ENCODE measurements at regions of chr20 and their contacts with region 1.

Region 1: GRCh38 chr20:53915446-53916172 is 154.8 kb downstream of the BCAS1 start:
- DNase-seq: peak; percentile 84 to 93 (median 87)
- ATAC-seq: peak; percentile 84
- H3K4me3 ChIP-seq: peak overlapping the region; percentile 38
- H3K27ac ChIP-seq: peak overlapping the region; percentile 82
- H3K4me1 ChIP-seq: peaks cover 25 to 41% of the 10 kb centered on the region in 2 experiments; a peak in 3 of 5 replicates
- H3K27me3 ChIP-seq: no peaks in the 10 kb centered on the region
- CTCF ChIP-seq: peak; percentile 76 to 91 (median 87)
- EP300 ChIP-seq: no peak
- POLR2A ChIP-seq: no peak; the same call in 1 of the 2 replicates
- RAD21 ChIP-seq: peak; percentile 78 to 85

Region 2: DNA sequence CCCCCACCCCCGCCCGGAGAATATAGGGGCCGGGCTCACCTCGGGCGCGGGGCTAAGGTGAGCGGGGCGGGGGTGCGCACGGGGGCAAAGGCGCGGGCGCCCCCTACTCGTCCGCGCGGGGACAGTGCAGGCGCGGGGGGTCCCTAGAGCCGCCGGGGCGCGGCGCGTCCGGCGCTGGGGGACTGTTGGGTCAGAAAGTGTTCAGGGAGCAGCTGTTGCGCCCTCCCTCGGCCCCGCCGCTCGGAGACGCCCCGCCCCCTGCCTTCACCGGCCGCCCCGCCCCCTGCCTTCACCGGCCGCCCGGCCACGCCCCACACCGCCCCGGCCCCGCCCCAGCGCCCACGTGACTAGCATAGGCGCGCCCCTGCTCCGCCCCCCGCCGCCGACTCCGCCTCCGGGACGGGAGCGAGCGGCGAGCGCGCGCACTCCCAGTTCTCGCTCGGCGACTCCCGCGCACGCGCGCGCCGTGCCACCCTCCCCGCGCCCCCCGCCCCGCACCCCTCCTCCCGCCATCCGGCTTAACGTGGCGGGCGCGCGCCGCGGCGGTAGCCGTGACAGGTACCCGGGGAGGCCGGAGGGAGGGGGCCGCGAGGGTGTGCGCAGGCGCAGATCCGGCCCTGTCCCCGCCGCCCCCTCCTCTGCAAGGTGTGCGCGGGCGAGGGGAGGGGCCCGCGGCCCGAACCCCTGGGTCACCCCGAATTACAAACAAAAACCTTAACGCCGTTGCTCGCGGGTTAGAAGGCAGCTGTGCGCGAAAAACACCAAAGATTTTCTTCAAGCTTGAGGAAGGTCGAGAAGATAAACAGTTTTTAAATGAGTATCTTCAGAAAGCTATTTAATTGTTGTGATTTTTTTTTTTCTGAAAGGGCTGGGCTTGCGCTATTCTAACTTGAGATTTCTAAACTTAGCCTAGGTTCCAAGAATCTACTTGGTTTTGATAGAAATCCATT is 321.3 kb before region 1 on chr20:
- CTCF ChIA-PET with region 1: no interaction called
- POLR2A ChIA-PET with region 1: interaction called, 8 read pairs
- in situ Hi-C with region 1: no loop called
- intact Hi-C with region 1: loop called (anchors 5 kb)
- DNase-seq: peak; percentile 85 to 92 (median 88)
- ATAC-seq: peak; percentile 76
- H3K4me3 ChIP-seq: peak overlapping the region; percentile 90
- H3K27ac ChIP-seq: peak overlapping the region; percentile 93
- H3K4me1 ChIP-seq: peaks cover 8 to 15% of the 10 kb centered on the region in 2 experiments; a peak in 4 of 5 replicates
- H3K27me3 ChIP-seq: no peaks in the 10 kb centered on the region
- CTCF ChIP-seq: peak in 2 of 3 experiments; percentile 59 to 79; a peak in 4 of 6 replicates
- EP300 ChIP-seq: no peak
- POLR2A ChIP-seq: no peak
- RAD21 ChIP-seq: peak; percentile 12 to 58; a peak in 2 of 4 replicates

Region 3: DNA sequence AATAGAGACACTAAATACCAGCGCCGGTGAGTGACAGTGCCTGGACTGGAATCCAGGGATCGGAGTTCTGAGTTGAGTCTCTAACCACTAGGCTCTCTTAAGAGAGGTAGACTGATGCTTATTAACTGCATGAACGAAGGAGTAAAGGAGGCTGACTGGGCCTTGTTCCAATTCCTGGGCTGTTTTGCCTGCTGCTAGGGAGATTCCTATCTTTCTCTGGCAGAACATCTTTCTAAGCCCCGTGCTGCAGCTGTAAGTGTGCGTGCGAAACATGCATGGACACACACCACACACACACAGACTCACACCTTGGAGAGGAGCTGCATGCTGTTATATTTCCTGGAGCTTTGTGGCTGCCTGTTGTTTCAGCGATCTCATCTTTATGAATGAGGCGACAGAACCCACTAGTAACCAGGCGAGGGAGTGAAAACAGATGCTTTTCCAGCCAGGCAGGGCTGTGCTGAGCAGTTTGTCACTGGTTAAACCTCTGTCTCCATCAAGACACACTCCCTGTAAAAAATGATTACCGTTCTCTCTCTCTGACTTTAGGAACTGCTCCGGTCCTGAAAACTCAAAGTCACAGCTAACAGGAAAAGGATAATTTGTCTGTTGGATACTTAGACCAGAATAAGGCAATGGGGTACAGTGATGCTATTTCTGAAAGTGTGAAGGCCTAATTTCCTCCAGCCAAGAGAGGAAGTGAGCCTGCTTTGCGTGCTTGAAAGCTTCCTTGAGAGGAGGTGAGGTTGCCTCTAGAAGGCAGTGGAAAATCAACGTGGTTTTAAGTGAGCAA is 164.6 kb before region 1 on chr20:
- CTCF ChIA-PET with region 1: no interaction called
- POLR2A ChIA-PET with region 1: no interaction called
- in situ Hi-C with region 1: no loop called
- intact Hi-C with region 1: loop called (anchors 5 kb)
- DNase-seq: peak in 2 of 4 experiments; percentile 28 to 68
- ATAC-seq: peak; percentile 61
- H3K4me3 ChIP-seq: no peak overlapping the region
- H3K27ac ChIP-seq: peak overlapping the region; percentile 92
- H3K4me1 ChIP-seq: peaks cover 16 to 39% of the 10 kb centered on the region in 2 experiments
- H3K27me3 ChIP-seq: no peaks in the 10 kb centered on the region
- CTCF ChIP-seq: no peak
- EP300 ChIP-seq: no peak
- POLR2A ChIP-seq: no peak
- RAD21 ChIP-seq: peak in 1 of 2 experiments; percentile 32; a peak in 1 of 4 replicates

Region 4: GRCh38 chr20:53869466-53870258 is 45.9 kb before region 1 on chr20:
- CTCF ChIA-PET with region 1: no interaction called
- POLR2A ChIA-PET with region 1: no interaction called
- in situ Hi-C with region 1: no loop called
- intact Hi-C with region 1: loop called (anchors 5 kb)
- DNase-seq: peak; percentile 54 to 90 (median 64)
- ATAC-seq: peak; percentile 93
- H3K4me3 ChIP-seq: no peak overlapping the region
- H3K27ac ChIP-seq: peak overlapping the region; percentile 48
- H3K4me1 ChIP-seq: peaks cover 2 to 10% of the 10 kb centered on the region in 2 experiments; a peak in 3 of 5 replicates
- H3K27me3 ChIP-seq: no peaks in the 10 kb centered on the region
- CTCF ChIP-seq: peak; percentile 75 to 88 (median 85)
- EP300 ChIP-seq: no peak
- POLR2A ChIP-seq: no peak
- RAD21 ChIP-seq: peak; percentile 88 to 90

Region 5: GRCh38 chr20:53891306-53891944 is 24.2 kb before region 1 on chr20:
- CTCF ChIA-PET with region 1: no interaction called
- POLR2A ChIA-PET with region 1: no interaction called
- in situ Hi-C with region 1: no loop called
- intact Hi-C with region 1: no loop called
- DNase-seq: no peak
- ATAC-seq: no peak
- H3K4me3 ChIP-seq: no peak overlapping the region
- H3K27ac ChIP-seq: no peak overlapping the region
- H3K4me1 ChIP-seq: peaks cover 0 to 8% of the 10 kb centered on the region in 2 experiments; a peak in 2 of 5 replicates
- H3K27me3 ChIP-seq: no peaks in the 10 kb centered on the region
- CTCF ChIP-seq: no peak
- EP300 ChIP-seq: no peak
- POLR2A ChIP-seq: no peak
- RAD21 ChIP-seq: no peak

Region 6: DNA sequence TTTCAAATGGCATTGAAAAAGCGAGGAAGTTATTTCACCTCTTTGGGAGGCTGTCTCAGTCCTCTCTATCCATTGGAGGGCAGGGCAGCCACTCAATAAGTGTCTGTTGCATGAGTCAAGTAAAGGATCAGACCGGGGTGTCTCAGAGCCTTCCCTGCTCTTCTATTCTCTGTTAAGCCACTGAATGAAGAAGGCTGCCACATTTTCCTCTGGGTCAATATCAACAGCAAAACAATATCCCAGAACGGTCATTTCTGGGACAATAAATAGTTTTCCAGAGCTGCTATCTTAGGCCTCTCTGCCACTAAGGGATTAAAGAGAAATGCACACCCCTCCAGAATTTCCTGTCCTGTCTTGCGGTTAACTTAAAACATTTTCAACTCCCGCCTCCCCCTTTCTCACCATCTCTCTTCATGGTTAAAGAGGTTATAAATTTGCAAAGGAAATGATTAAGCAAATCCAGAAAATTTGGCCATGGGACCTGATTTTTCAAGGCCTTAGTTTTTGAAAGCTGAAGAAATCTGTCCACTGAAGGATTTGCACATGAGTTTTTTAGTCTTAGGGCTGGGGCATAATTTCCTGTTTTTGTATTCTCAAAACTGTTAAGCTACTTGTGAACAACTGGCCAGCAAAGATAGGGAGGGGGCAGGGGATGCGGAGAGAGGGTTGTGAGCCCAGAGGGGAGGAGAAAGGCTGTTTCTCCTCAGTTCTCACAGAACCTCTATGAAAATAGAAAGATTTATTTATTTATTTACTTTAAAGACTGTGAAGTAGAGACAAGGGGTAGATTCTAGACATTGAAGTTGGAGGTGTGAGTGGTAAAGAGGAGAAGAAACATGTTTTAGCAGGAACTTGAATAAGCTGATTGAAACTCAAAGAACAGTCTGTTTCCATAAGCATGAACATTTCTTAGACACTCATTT is 19.1 kb after region 1 on chr20:
- CTCF ChIA-PET with region 1: no interaction called
- POLR2A ChIA-PET with region 1: interaction called, 6 read pairs
- in situ Hi-C with region 1: no loop called
- intact Hi-C with region 1: loop called (anchors 1 kb)
- DNase-seq: peak; percentile 65 to 87 (median 76)
- ATAC-seq: peak; percentile 93
- H3K4me3 ChIP-seq: no peak overlapping the region; the same call in 1 of the 2 replicates
- H3K27ac ChIP-seq: peak overlapping the region; percentile 89
- H3K4me1 ChIP-seq: peaks cover 0 to 47% of the 10 kb centered on the region in 2 experiments; a peak in 4 of 5 replicates
- H3K27me3 ChIP-seq: no peaks in the 10 kb centered on the region
- CTCF ChIP-seq: no peak
- EP300 ChIP-seq: peak; percentile 75; the same call in 1 of the 2 replicates
- POLR2A ChIP-seq: peak; percentile 69
- RAD21 ChIP-seq: no peak

Region 7: GRCh38 chr20:54005524-54005923 is 89.9 kb after region 1 on chr20:
- CTCF ChIA-PET with region 1: no interaction called
- POLR2A ChIA-PET with region 1: no interaction called
- in situ Hi-C with region 1: no loop called
- intact Hi-C with region 1: no loop called
- DNase-seq: no peak
- ATAC-seq: no peak
- H3K4me3 ChIP-seq: no peak overlapping the region
- H3K27ac ChIP-seq: no peak overlapping the region
- H3K4me1 ChIP-seq: no peaks in the 10 kb centered on the region
- H3K27me3 ChIP-seq: peaks cover 0 to 9% of the 10 kb centered on the region in 2 experiments; a peak in 3 of 5 replicates
- CTCF ChIP-seq: no peak
- EP300 ChIP-seq: no peak
- POLR2A ChIP-seq: no peak
- RAD21 ChIP-seq: no peak

Measured in K562 (cell line).